ENCODE measurements at regions of chrX and their contacts with region 1.

Region 1: DNA sequence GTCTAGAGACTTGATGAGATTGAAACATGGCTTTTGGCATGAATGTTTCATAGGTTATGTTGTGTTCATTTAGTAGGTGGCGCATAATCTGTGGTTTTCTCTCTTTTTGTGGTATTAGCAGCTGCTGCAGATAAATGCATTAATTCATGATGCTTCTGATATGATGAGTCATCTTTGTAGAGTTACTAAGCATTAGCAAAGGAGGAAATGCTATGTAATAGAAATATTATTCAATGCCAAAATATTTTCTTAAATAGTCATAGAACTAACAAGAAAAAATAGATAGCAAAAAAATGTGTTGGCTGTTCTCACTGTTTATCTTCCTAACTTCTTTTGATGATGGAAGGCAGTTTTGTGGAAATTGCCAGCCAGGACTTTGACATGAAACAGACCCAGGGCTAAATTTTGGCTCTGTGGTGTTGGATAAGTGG is 3.6 kb downstream of the ZXDB start:
- DNase-seq: peak; percentile 85
- ATAC-seq: no peak; the same call in 1 of the 2 replicates
- H3K4me3 ChIP-seq: no peak overlapping the region; the same call in 1 of the 2 replicates
- H3K27ac ChIP-seq: no peak overlapping the region
- H3K4me1 ChIP-seq: peaks cover 2% of the 10 kb centered on the region; the same call in 1 of the 2 replicates
- H3K27me3 ChIP-seq: no peaks in the 10 kb centered on the region
- CTCF ChIP-seq: no peak
- POLR2A ChIP-seq: no peak
- RAD21 ChIP-seq: no peak

Region 2: GRCh38 chrX:56563231-56564161 is 1031.9 kb before region 1 on chrX and contains the start of gene UBQLN2:
- CTCF ChIA-PET with region 1: no interaction called
- POLR2A ChIA-PET with region 1: no interaction called
- dilution Hi-C with region 1: no loop called
- in situ Hi-C with region 1: no loop called
- intact Hi-C with region 1: loop called (anchors 10 kb)
- DNase-seq: peak; percentile 70
- ATAC-seq: peak; percentile 91
- H3K4me3 ChIP-seq: peak within 1 kb of the TSS; percentile 93
- H3K27ac ChIP-seq: peak within 1 kb of the TSS; percentile 99
- H3K4me1 ChIP-seq: no peaks in the 10 kb centered on the region; the same call in 1 of the 2 replicates
- H3K27me3 ChIP-seq: no peaks in the 10 kb centered on the region
- CTCF ChIP-seq: 0 out of 2 replicates have a peak, but pooled peaks have one; percentile 25
- POLR2A ChIP-seq: peak; percentile 77
- RAD21 ChIP-seq: no peak
- total RNA-seq, gene UBQLN2: 4.1 and 5.6 TPM in 2 replicates

Region 3: GRCh38 chrX:57156397-57157049 is 438.9 kb before region 1 on chrX:
- CTCF ChIA-PET with region 1: no interaction called
- POLR2A ChIA-PET with region 1: no interaction called
- dilution Hi-C with region 1: no loop called
- in situ Hi-C with region 1: no loop called
- intact Hi-C with region 1: loop called (anchors 10 kb)
- DNase-seq: peak; percentile 40
- ATAC-seq: peak; percentile 85
- H3K4me3 ChIP-seq: no peak overlapping the region
- H3K27ac ChIP-seq: no peak overlapping the region
- H3K4me1 ChIP-seq: no peaks in the 10 kb centered on the region
- H3K27me3 ChIP-seq: no peaks in the 10 kb centered on the region
- CTCF ChIP-seq: peak; percentile 43
- POLR2A ChIP-seq: no peak
- RAD21 ChIP-seq: peak; percentile 40; the same call in 1 of the 2 replicates

Region 4: DNA sequence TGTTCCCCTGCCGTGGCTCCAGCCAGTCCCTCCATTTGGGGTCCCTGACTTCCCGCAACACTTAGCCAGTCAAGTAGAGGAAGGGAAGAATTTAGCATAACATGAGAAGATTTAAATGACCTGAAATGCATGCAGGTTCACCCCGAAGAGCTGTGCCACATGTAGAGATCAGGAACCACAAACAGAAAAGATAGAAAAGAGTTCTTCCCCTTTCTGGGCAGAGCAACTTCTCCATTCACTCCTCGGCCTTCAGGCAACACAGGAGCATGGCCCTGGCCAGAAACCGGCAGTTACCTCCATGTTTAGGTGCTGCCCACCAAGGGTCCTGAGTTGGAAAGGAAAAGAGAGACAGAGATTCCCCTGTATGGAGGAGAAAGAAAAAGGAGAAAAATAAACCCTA is 79.5 kb after region 1 on chrX:
- CTCF ChIA-PET with region 1: no interaction called
- POLR2A ChIA-PET with region 1: no interaction called
- dilution Hi-C with region 1: no loop called
- in situ Hi-C with region 1: no loop called
- intact Hi-C with region 1: no loop called
- DNase-seq: no peak
- ATAC-seq: no peak
- H3K4me3 ChIP-seq: no peak overlapping the region
- H3K27ac ChIP-seq: no peak overlapping the region
- H3K4me1 ChIP-seq: no peaks in the 10 kb centered on the region
- H3K27me3 ChIP-seq: no peaks in the 10 kb centered on the region
- CTCF ChIP-seq: no peak
- POLR2A ChIP-seq: no peak
- RAD21 ChIP-seq: no peak

Region 5: GRCh38 chrX:57906790-57907189 is 311.4 kb after region 1 on chrX:
- CTCF ChIA-PET with region 1: no interaction called
- POLR2A ChIA-PET with region 1: no interaction called
- dilution Hi-C with region 1: no loop called
- in situ Hi-C with region 1: no loop called
- intact Hi-C with region 1: loop called (anchors 5 kb)
- DNase-seq: peak; percentile 61
- ATAC-seq: peak; percentile 19; the same call in 1 of the 2 replicates
- H3K4me3 ChIP-seq: no peak overlapping the region
- H3K27ac ChIP-seq: no peak overlapping the region
- H3K4me1 ChIP-seq: 0 out of 2 replicates have a peak, but pooled peaks cover 2% of the 10 kb centered on the region
- H3K27me3 ChIP-seq: no peaks in the 10 kb centered on the region
- CTCF ChIP-seq: no peak
- POLR2A ChIP-seq: no peak
- RAD21 ChIP-seq: no peak

Measured in IMR-90 (cell line).